Activated CD4-positive, alpha-beta T cell treated with anti-CD3 and anti-CD28 coated beads for 36 hours (primary cell): ENCODE measurements at regions of chr1 and their contacts with region 1.

Region 1: DNA sequence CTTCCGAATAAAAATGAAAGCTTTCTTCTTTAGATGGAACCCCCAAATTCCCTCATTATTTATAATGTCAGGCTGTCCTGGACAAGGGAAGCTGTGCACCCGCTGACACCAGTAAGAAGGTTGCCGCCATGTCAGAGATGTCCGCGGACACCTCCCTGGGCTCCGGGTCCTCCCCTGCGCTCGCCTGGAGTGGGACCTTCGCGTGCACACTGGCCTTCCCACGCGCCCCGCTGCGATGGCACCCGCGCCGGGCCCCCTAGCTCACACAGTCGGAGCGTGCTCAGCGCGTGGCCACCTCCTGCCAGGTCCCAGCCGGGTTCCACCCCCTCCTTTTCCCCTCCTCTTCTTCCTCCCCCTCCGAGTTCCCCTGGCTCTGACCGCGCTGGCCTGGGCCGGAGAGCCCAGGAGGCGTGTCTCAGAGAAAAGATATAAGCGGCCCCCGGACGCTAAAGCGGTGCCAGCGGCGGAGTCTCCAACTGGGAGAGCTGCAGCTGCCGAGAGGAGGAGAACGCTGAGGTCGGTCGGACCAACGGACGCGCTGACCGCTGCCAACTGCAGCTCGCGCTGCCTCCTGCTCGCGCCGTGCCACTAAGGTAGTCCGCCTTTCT is at the start of gene G0S2:
- DNase-seq: peak; percentile 70
- ATAC-seq: peak; percentile 31
- H3K4me3 Mint-ChIP-seq: peak within 1 kb of the TSS; percentile 71
- H3K27ac Mint-ChIP-seq: peak within 1 kb of the TSS; percentile 84
- H3K4me1 Mint-ChIP-seq: peaks cover 56% of the 10 kb centered on the region
- H3K27me3 Mint-ChIP-seq: peaks cover 38% of the 10 kb centered on the region
- total RNA-seq, gene G0S2: 21.9 to 22.8 TPM

Region 2: GRCh38 chr1:209010475-209011230 is 664.4 kb before region 1 on chr1:
- CTCF ChIA-PET with region 1: no interaction called
- POLR2A ChIA-PET with region 1: no interaction called
- intact Hi-C with region 1: no loop called
- DNase-seq: no peak
- ATAC-seq: no peak
- H3K4me3 Mint-ChIP-seq: no peak overlapping the region
- H3K27ac Mint-ChIP-seq: no peak overlapping the region
- H3K4me1 Mint-ChIP-seq: no peaks in the 10 kb centered on the region
- H3K27me3 Mint-ChIP-seq: no peaks in the 10 kb centered on the region

Region 3: DNA sequence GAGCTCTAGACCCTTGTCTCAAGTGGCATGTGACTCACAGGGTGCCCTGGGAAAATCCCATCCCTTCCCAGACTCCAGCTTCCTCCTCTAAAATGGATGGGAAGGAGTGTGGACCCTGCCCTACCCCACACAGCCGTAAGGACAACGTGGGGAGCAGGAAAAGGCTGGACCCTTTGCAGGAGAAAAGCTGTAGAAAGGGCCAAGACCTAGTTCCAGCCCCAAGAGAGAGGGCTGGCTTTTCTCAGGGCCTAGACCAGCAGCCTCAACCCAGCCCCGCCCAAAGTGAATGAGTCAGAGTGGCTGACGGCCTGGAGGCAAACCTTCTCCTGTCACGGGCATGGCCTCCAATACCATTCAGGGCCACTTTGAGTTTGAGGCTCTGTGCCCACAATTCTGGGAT is 23.9 kb before region 1 on chr1:
- CTCF ChIA-PET with region 1: interaction called, 7 read pairs
- POLR2A ChIA-PET with region 1: interaction called, 3 read pairs
- intact Hi-C with region 1: loop called (anchors 1 kb)
- DNase-seq: peak; percentile 84
- ATAC-seq: peak; percentile 91
- H3K4me3 Mint-ChIP-seq: no peak overlapping the region
- H3K27ac Mint-ChIP-seq: peak overlapping the region; percentile 73
- H3K4me1 Mint-ChIP-seq: peaks cover 54% of the 10 kb centered on the region
- H3K27me3 Mint-ChIP-seq: no peaks in the 10 kb centered on the region

Region 4: GRCh38 chr1:209659909-209660308 is 15.2 kb before region 1 on chr1:
- CTCF ChIA-PET with region 1: no interaction called
- POLR2A ChIA-PET with region 1: interaction called, 5 read pairs
- intact Hi-C with region 1: loop called in 1 of 2 experiments (anchors 1 kb)
- DNase-seq: peak; percentile 27
- ATAC-seq: peak; percentile 97
- H3K4me3 Mint-ChIP-seq: no peak overlapping the region
- H3K27ac Mint-ChIP-seq: peak overlapping the region; percentile 21
- H3K4me1 Mint-ChIP-seq: peaks cover 22% of the 10 kb centered on the region
- H3K27me3 Mint-ChIP-seq: peaks cover 2% of the 10 kb centered on the region

Region 5: DNA sequence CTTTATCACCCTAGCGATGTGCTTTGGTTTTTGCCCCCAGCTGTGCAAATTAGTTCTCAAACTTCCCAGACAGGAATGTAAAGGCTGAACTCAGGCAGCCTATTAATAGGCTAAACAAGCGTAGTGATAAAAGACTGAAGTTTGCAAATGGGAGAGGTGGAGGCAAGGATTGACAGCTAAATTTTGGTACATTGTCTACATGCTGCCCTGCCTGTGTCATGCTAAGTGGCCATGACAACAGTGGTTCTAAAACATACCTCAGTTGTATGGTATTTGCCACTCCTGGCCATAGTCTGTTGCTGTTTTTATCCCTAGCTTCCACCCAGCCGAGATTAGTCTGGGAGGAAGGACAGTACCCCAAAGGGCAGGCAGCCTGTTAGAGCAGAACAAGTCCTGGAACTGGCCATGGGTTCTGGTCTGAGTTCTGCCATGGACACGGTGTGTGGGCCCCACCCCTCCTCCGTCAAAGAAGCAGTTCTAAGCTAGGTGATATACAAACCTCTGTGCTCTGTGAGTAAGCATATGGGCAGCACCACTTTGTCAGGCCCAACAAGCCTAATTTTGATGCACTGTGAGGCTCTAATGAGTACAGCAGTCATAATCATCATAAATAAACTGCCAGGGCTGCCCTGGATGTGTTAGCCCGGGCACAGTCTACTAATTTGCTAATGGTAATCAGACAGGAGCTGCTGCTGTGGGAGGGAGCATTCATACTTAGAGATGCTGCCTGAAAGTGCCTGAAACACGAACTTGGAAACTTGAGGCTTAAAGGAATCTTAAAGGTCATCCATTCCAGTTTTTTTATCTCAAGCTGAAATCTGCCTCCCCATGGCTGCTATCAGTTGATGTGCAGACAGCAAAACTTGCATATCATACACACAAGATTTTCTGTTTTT is 830.8 kb after region 1 on chr1:
- CTCF ChIA-PET with region 1: no interaction called
- POLR2A ChIA-PET with region 1: no interaction called
- intact Hi-C with region 1: no loop called
- DNase-seq: no peak
- ATAC-seq: no peak
- H3K4me3 Mint-ChIP-seq: no peak overlapping the region
- H3K27ac Mint-ChIP-seq: no peak overlapping the region
- H3K4me1 Mint-ChIP-seq: no peaks in the 10 kb centered on the region
- H3K27me3 Mint-ChIP-seq: no peaks in the 10 kb centered on the region